ENCODE measurements at regions of chrX and their contacts with region 1.

Region 1: DNA sequence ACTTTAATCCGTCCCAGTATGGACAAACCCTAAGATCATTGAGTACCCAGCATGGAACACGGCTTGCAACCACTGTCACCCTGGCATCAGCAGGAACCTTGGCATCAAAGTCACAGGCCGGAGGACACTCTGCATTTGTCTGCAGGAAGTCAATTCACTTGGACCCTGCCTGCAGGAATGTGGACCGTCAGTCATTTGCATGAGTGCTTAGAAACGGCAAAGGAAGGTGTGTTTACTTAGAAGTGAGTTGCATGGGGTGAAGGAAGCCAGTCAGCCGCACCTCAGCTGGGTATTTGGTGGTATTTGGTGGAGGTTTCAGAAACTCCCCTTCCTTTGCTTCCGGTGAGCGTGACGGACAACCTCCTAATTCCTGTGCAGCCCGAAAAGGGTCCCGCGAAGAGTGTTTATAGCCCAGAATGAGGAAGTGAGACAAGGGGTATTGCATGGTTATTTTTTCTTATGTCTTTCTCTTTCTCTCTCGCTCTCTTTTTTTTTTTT is 15.5 kb downstream of the P2RY8 start:
- DNase-seq: peak; percentile 80
- CTCF ChIP-seq: no peak

Region 2: DNA sequence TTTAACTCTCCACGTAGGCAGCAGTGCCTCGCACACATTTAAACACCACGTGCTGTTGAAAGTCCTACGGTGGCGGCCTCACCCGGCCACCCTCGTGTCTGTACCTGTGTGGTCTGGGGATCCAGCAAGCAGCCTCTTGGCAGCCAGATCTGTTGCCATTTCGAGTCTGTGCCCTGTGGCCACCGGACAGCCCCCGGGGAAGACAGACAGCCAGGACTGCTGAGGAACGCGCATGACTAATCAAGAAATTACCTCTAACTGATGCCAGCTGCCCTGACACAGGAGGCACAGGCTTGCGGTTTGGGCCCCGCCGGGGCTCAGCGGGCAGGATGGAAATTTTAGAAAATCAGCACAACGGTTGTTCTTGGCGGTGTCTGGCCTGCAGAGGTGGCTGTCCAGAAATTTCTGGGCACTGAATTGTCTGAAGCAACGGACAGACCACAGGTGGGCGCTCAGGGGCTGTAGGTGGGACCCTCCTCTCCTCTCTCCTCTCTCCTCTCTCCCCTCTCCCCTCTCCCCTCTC is 53.2 kb before region 1 on chrX:
- in situ Hi-C with region 1: loop called (anchors 10 kb)
- DNase-seq: peak; percentile 71
- CTCF ChIP-seq: peak; percentile 42